Mammary epithelial cell (primary cell): ENCODE measurements at regions of chr11 and their contacts with region 1.

Region 1: GRCh38 chr11:63901660-63902059 is 15.3 kb downstream of the RCOR2 start:
- DNase-seq: no peak
- H3K4me3 ChIP-seq: no peak overlapping the region
- H3K27ac ChIP-seq: no peak overlapping the region
- H3K4me1 ChIP-seq: no peaks in the 10 kb centered on the region
- H3K27me3 ChIP-seq: no peaks in the 10 kb centered on the region
- CTCF ChIP-seq: peak; percentile 15 to 46

Region 2: GRCh38 chr11:63813035-63813562 is 88.6 kb before region 1 on chr11 and contains the start of gene SPINDOC:
- CTCF ChIA-PET with region 1: no interaction called
- dilution Hi-C with region 1: loop called (anchors 5 kb)
- in situ Hi-C with region 1: no loop called
- intact Hi-C with region 1: no loop called
- DNase-seq: peak; percentile 68
- H3K4me3 ChIP-seq: peak within 1 kb of the TSS; percentile 71 to 97 (median 95)
- H3K27ac ChIP-seq: peak within 1 kb of the TSS; percentile 19
- H3K4me1 ChIP-seq: peaks cover 13% of the 10 kb centered on the region
- H3K27me3 ChIP-seq: no peaks in the 10 kb centered on the region
- CTCF ChIP-seq: no peak
- total RNA-seq, gene SPINDOC: 19.2 to 24.4 TPM

Region 3: GRCh38 chr11:63951779-63952536 is 50.3 kb after region 1 on chr11:
- CTCF ChIA-PET with region 1: interaction called, 4 read pairs
- dilution Hi-C with region 1: loop called (anchors 5 kb)
- in situ Hi-C with region 1: no loop called
- intact Hi-C with region 1: no loop called
- DNase-seq: peak; percentile 51
- H3K4me3 ChIP-seq: no peak overlapping the region
- H3K27ac ChIP-seq: peak overlapping the region; percentile 43
- H3K4me1 ChIP-seq: peaks cover 13% of the 10 kb centered on the region
- H3K27me3 ChIP-seq: no peaks in the 10 kb centered on the region
- CTCF ChIP-seq: no peak